ENCODE measurements at regions of chr12 and their contacts with region 1.

Region 1: DNA sequence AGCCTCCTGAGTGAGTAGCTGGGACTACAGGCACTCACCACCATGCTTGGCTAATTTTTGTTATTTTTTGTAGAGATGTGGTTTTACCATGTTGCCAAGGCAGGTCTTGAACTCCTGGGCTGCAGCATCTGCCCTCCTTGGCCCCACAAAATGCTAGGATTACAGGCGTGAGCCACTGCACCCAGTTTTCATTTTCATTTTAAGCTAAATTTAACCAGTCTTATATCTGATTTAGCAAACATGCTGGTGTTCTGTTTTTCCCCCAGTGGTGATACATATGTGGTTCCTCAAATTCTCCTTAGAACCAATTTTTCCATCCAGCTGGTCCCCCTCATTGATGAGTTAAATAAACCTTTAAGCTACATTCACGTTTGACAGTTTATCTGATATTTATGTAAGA is 43.8 kb upstream of the BICD1 start:
- DNase-seq: no peak
- ATAC-seq: no peak
- H3K4me3 ChIP-seq: no peak overlapping the region
- H3K27ac ChIP-seq: no peak overlapping the region
- H3K4me1 ChIP-seq: no peaks in the 10 kb centered on the region
- H3K27me3 ChIP-seq: no peaks in the 10 kb centered on the region

Region 2: DNA sequence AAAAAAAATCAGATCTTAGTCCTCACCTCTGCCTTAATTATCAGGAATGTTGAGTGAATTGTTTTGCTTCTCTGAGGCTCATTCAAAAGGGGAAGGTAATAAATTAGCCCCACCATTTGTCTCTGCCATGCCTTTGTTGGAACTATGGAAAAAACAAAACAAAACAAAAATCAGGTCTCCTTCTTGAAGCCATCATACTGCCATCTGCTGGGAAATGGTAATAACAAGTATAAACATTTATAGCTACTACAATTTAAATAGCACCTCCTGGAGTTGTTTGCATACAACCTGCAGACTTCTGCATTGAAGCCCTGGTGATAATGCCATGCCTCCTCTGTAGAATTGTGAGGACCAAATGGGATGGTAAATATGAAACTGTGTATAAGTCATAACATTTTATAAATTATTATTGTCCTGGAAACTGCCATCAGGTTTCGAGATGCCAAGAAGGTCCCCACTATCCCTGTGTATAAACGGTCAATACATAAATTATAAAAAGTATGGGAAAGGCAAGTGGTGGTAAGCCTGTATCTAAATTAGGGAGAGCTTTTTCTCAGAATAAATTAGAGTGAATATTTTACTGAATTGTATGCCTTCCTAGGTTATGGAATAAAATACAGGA is 249.3 kb after region 1 on chr12:
- intact Hi-C with region 1: loop called (anchors 1 to 5 kb)
- DNase-seq: no peak
- ATAC-seq: no peak
- H3K4me3 ChIP-seq: no peak overlapping the region
- H3K27ac ChIP-seq: no peak overlapping the region
- H3K4me1 ChIP-seq: no peaks in the 10 kb centered on the region
- H3K27me3 ChIP-seq: no peaks in the 10 kb centered on the region

Measured in aorta (tissue), 5 donors.